Activated naive CD8-positive, alpha-beta T cell treated with anti-CD3 and anti-CD28 coated beads, Interleukin-2, amount 10 ng/mL, durations not matched to agents 7 days and 5 days (primary cell): ENCODE measurements at regions of chr17 and their contacts with region 1.

Region 1: GRCh38 chr17:38824899-38825761 is at the start of gene CWC25:
- DNase-seq: peak; percentile 99
- ATAC-seq: peak; percentile 77
- H3K4me3 Mint-ChIP-seq: peak within 1 kb of the TSS; percentile 100
- H3K27ac Mint-ChIP-seq: peak within 1 kb of the TSS; percentile 99
- H3K4me1 Mint-ChIP-seq: peaks cover 22% of the 10 kb centered on the region
- H3K27me3 Mint-ChIP-seq: no peaks in the 10 kb centered on the region
- total RNA-seq, gene CWC25: 35.2 to 37.5 TPM

Region 2: GRCh38 chr17:38702166-38702899 is 122.8 kb before region 1 on chr17:
- POLR2A ChIA-PET with region 1: no interaction called
- DNase-seq: peak; percentile 85
- ATAC-seq: peak; percentile 40
- H3K4me3 Mint-ChIP-seq: peak overlapping the region; percentile 96
- H3K27ac Mint-ChIP-seq: peak overlapping the region; percentile 97
- H3K4me1 Mint-ChIP-seq: peaks cover 28% of the 10 kb centered on the region
- H3K27me3 Mint-ChIP-seq: no peaks in the 10 kb centered on the region

Region 3: DNA sequence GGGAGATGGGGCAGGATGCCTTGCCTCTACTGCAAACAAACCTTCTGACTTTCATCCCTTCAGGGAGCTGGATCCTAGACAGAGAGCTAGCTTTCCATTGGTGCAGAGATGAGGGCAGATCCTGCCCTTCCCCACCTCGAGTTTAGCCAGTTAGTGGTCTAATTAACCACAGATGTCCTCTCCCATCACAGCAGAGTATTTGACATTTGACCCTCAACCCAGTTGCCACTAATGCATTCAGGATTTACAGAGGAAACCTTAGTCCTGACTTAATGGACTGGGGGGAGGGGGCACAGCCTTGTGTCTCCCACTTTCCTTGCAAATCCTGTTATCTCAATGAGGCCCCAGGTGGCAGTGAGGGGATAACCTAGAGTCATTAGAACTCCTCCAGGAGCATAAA is 35.9 kb before region 1 on chr17:
- POLR2A ChIA-PET with region 1: no interaction called
- DNase-seq: no peak
- ATAC-seq: no peak
- H3K4me3 Mint-ChIP-seq: no peak overlapping the region
- H3K27ac Mint-ChIP-seq: no peak overlapping the region
- H3K4me1 Mint-ChIP-seq: peaks cover 3% of the 10 kb centered on the region
- H3K27me3 Mint-ChIP-seq: no peaks in the 10 kb centered on the region

Region 4: GRCh38 chr17:38841141-38841485 is 16.0 kb after region 1 on chr17:
- POLR2A ChIA-PET with region 1: interaction called, 11 read pairs
- DNase-seq: peak; percentile 43
- ATAC-seq: peak; percentile 66
- H3K4me3 Mint-ChIP-seq: peak overlapping the region; percentile 79
- H3K27ac Mint-ChIP-seq: peak overlapping the region; percentile 54
- H3K4me1 Mint-ChIP-seq: peaks cover 5% of the 10 kb centered on the region
- H3K27me3 Mint-ChIP-seq: no peaks in the 10 kb centered on the region